Spleen (tissue), 13 donors: ENCODE measurements at regions of chr14 and their contacts with region 1.

Region 1: DNA sequence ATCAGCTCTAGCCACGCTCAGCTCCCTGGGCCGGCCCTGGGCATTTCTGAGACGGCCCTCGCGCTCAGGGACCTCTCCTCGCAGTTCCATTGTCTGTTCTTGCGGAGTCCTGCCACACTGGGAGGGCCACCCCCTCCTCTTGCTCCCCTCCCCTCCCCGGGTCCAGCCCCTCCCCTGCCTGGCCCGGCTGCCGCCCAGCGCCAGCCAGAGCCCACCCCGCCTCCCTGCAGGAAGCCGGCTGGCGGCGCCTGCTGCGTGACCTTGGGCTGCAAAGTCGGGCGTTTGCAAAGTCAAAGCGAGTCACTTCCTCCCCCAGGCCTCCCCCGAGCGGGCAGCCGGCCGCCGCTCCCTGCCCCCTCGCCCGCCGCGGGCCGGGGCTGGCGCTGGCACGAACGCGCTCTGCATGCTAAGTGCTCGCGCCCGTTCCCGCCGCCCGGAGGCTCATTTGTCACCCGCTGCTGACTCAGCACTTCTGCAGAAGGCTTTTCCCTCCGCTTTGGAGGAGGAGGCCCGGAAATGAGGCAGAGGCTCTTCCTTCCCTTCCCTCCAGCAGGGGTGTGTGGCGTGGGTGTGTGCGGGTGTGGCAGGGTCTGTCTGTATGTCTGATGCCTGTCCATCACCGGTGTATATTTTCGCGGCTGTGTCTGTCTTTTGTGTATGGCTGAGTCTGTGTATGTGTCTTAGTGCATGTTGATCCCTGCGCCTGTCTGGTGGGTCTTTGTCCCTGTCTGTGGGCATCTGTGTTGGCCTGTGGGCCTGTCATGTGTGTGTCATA is 72.0 kb downstream of the IRF2BPL start:
- DNase-seq: peak; percentile 97
- H3K4me3 ChIP-seq: peak overlapping the region; percentile 12 to 70 (median 40)
- H3K27ac ChIP-seq: peak overlapping the region; percentile 91 to 99 (median 97)
- H3K4me1 ChIP-seq: peaks cover 44 to 98% (median 75%) of the 10 kb centered on the region in 6 donors
- H3K27me3 ChIP-seq: no peaks in the 10 kb centered on the region
- CTCF ChIP-seq: peak in 7 of 11 experiments; percentile 15 to 72 (median 47)
- POLR2A ChIP-seq: peak in 2 of 3 donors; percentile 9 to 42

Region 2: GRCh38 chr14:76918751-76919543 is 37.6 kb before region 1 on chr14:
- intact Hi-C with region 1: loop called (anchors 5 kb)
- DNase-seq: peak; percentile 88
- H3K4me3 ChIP-seq: peak overlapping the region in 1 of 8 donors; percentile 32
- H3K27ac ChIP-seq: peak overlapping the region; percentile 54 to 88 (median 76)
- H3K4me1 ChIP-seq: peaks cover 26 to 82% (median 52%) of the 10 kb centered on the region in 6 donors
- H3K27me3 ChIP-seq: peaks cover 0 to 6% (median 0%) of the 10 kb centered on the region in 7 donors
- CTCF ChIP-seq: peak in 1 of 11 experiments; percentile 11
- POLR2A ChIP-seq: no peak

Region 3: DNA sequence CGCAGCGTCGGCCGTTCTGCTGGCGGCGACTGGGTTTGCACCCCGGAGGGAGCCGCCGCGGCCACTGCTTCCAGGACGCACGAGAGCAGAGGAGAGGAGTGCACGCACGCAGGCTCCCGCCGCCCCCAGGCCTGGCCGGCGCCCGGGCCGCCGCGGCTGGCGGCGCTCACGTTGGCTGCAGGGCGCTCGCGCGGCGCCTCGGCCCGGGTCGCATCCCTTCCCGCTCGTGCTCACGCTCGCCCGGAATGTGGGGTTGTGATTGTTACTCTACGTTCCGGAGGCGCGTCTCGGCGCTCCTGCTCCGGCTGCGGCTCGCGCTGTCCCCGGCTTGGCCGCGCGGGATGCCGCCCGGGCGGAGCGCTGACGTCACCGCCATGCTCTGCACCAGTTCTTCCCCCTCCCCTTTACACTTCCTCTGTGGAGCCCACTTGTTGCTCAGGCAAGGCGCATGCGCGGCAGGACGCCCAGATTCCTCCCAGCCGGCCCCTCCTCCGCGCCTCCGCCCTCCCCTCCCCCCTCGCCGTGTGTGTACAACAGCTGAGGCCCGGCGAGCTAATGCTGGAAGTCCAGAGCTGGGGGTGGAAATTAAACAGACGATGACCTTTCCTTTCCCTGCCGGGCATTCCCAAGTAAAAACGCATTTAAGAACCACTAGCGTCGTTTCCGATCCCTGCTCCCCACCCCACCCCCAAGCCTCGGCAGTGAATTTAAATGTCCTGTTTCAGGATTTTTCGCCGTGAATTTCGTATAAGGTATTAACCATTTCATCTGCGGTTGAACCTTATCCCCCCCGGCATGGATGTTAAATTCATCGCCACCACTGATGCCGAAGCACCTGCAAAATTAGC is 72.1 kb after region 1 on chr14 and contains the start of gene IRF2BPL:
- intact Hi-C with region 1: loop called (anchors 5 kb)
- DNase-seq: peak; percentile 100
- H3K4me3 ChIP-seq: peak within 1 kb of the TSS; percentile 59 to 95 (median 70)
- H3K27ac ChIP-seq: peak within 1 kb of the TSS; percentile 97 to 100 (median 100)
- H3K4me1 ChIP-seq: peaks cover 46 to 85% (median 77%) of the 10 kb centered on the region in 6 donors
- H3K27me3 ChIP-seq: no peaks in the 10 kb centered on the region
- CTCF ChIP-seq: peak in 4 of 11 experiments; percentile 6 to 46 (median 35)
- POLR2A ChIP-seq: peak; percentile 55 to 95 (median 94)
- total RNA-seq, gene IRF2BPL: 38.2 to 62.7 (median 47.7) TPM

Region 4: GRCh38 chr14:77076113-77076631 is 119.7 kb after region 1 on chr14:
- intact Hi-C with region 1: no loop called
- DNase-seq: no peak
- H3K4me3 ChIP-seq: peak overlapping the region in 4 of 8 donors; percentile 3 to 56 (median 14)
- H3K27ac ChIP-seq: peak overlapping the region; percentile 32 to 92 (median 82)
- H3K4me1 ChIP-seq: peaks cover 0 to 40% (median 19%) of the 10 kb centered on the region in 6 donors
- H3K27me3 ChIP-seq: no peaks in the 10 kb centered on the region
- CTCF ChIP-seq: peak in 1 of 11 experiments; percentile 23
- POLR2A ChIP-seq: peak in 2 of 3 donors; percentile 30 to 32

Region 5: DNA sequence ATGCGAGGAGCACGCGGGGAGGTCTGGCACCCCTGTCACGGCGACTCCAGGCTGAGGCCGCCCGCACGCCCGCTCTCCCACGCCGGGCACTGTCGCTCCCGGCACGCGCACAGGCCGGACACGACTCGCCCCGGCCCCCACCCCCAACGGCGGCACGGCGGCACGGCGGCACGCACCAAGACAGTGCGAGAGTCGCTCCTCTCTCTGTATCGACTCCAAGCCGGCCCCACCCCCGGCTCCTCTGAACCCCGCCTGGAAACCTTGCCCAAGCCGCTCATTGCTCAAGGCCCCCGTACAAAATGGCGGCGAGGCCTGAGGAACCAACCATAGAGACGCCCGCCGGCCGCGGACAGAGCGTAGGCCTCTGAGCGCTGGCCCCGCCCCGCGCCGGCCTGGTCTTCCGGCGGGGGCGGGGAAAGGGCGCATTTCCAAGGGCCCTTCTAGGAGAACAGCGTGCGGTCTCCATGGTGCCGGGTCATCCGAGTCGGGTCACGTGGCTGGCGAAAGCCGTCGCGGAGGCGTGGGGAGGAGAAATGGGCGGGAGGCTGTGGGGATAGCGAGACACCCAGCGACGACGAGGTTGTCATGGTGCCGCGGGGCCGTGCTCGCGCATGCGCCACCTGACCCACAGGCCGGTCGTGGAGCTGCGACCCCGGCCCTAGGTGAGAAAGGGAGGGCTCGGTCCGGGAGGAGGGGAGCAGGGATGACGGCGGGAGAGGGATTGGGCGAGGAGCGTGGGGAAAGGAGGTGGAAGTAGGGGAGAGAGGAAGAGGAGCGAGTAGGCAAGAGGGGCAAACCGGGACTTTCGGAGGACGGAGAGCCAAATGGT is 141.4 kb after region 1 on chr14 and contains the start of gene CIPC:
- intact Hi-C with region 1: no loop called
- DNase-seq: peak; percentile 100
- H3K4me3 ChIP-seq: peak within 1 kb of the TSS; percentile 64 to 81 (median 73)
- H3K27ac ChIP-seq: peak within 1 kb of the TSS; percentile 93 to 99 (median 96)
- H3K4me1 ChIP-seq: peaks cover 22 to 81% (median 54%) of the 10 kb centered on the region in 6 donors
- H3K27me3 ChIP-seq: no peaks in the 10 kb centered on the region
- CTCF ChIP-seq: peak in 6 of 11 experiments; percentile 7 to 51 (median 26)
- POLR2A ChIP-seq: peak in 2 of 3 donors; percentile 44 to 87
- total RNA-seq, gene CIPC: 14.9 to 33.8 (median 24.7) TPM